ENCODE measurements at regions of chr11 and their contacts with region 1.

Region 1: GRCh38 chr11:87290304-87290922 is 252.7 kb downstream of the TMEM135 start:
- DNase-seq: peak in 1 of 2 experiments; percentile 63
- H3K4me3 ChIP-seq: no peak overlapping the region
- H3K27ac ChIP-seq: no peak overlapping the region
- H3K4me1 ChIP-seq: no peaks in the 10 kb centered on the region
- H3K27me3 ChIP-seq: no peaks in the 10 kb centered on the region
- CTCF ChIP-seq: peak; percentile 90

Region 2: GRCh38 chr11:86360775-86361395 is 929.5 kb before region 1 on chr11:
- CTCF ChIA-PET with region 1: no interaction called
- POLR2A ChIA-PET with region 1: no interaction called
- intact Hi-C with region 1: loop called (anchors 10 kb)
- DNase-seq: peak in 1 of 2 experiments; percentile 65
- H3K4me3 ChIP-seq: no peak overlapping the region
- H3K27ac ChIP-seq: no peak overlapping the region
- H3K4me1 ChIP-seq: no peaks in the 10 kb centered on the region
- H3K27me3 ChIP-seq: no peaks in the 10 kb centered on the region
- CTCF ChIP-seq: peak; percentile 77

Region 3: DNA sequence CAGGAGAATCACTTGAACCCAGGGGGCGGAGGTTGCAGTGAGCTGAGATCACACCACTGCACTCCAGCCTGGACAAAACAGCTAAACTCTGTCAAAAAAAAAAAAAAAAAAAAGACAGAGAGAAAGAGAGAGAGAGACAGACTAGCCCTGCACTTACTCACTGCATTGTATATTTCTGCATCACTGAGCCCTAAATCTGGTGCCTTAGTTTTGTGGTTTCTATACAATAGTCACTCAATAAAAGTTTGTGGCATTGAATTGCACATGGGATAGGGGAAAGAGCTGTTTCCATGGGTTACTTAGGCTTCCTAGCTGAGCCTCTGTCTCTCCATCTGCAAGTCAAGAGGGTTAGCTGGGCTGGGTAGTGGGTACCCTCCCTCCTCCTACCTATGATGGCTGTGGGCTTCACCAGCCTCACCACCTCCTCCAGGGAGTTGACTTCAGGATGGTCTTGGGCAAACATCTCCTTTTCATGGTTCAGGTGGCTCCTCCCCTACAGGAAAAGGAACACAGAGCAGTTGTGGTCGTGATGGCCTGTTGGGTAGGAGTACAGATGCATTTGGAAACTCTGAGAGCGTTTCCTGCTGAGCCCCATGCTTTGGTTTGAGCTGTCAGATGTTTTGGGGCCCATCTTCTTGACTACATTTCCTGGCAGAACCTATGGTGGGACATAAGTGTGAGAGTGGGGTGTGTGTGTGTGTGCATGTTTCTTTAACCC is 842.5 kb before region 1 on chr11:
- CTCF ChIA-PET with region 1: no interaction called
- POLR2A ChIA-PET with region 1: no interaction called
- intact Hi-C with region 1: no loop called
- DNase-seq: no peak
- H3K4me3 ChIP-seq: no peak overlapping the region
- H3K27ac ChIP-seq: no peak overlapping the region
- H3K4me1 ChIP-seq: peaks cover 3% of the 10 kb centered on the region
- H3K27me3 ChIP-seq: no peaks in the 10 kb centered on the region
- CTCF ChIP-seq: no peak

Region 4: GRCh38 chr11:86869966-86870570 is 420.3 kb before region 1 on chr11:
- CTCF ChIA-PET with region 1: no interaction called
- POLR2A ChIA-PET with region 1: no interaction called
- intact Hi-C with region 1: loop called (anchors 1 kb)
- DNase-seq: peak in 1 of 2 experiments; percentile 25
- H3K4me3 ChIP-seq: no peak overlapping the region
- H3K27ac ChIP-seq: no peak overlapping the region
- H3K4me1 ChIP-seq: no peaks in the 10 kb centered on the region
- H3K27me3 ChIP-seq: no peaks in the 10 kb centered on the region
- CTCF ChIP-seq: peak; percentile 95

Region 5: GRCh38 chr11:86938900-86939880 is 351.2 kb before region 1 on chr11:
- CTCF ChIA-PET with region 1: no interaction called
- POLR2A ChIA-PET with region 1: no interaction called
- intact Hi-C with region 1: loop called (anchors 1 kb)
- DNase-seq: peak in 1 of 2 experiments; percentile 58
- H3K4me3 ChIP-seq: no peak overlapping the region
- H3K27ac ChIP-seq: no peak overlapping the region
- H3K4me1 ChIP-seq: peaks cover 26% of the 10 kb centered on the region
- H3K27me3 ChIP-seq: no peaks in the 10 kb centered on the region
- CTCF ChIP-seq: peak; percentile 83

Region 6: GRCh38 chr11:86955361-86956120 is 334.9 kb before region 1 on chr11 and contains the start of gene FZD4:
- CTCF ChIA-PET with region 1: no interaction called
- POLR2A ChIA-PET with region 1: no interaction called
- intact Hi-C with region 1: loop called (anchors 5 kb)
- DNase-seq: peak; percentile 77 to 91
- H3K4me3 ChIP-seq: peak within 1 kb of the TSS; percentile 85
- H3K27ac ChIP-seq: peak within 1 kb of the TSS; percentile 56
- H3K4me1 ChIP-seq: peaks cover 16% of the 10 kb centered on the region
- H3K27me3 ChIP-seq: no peaks in the 10 kb centered on the region
- CTCF ChIP-seq: peak; percentile 54; the same call in 1 of the 2 replicates
- total RNA-seq, gene FZD4: 2.6 TPM in 2 replicates

Region 7: DNA sequence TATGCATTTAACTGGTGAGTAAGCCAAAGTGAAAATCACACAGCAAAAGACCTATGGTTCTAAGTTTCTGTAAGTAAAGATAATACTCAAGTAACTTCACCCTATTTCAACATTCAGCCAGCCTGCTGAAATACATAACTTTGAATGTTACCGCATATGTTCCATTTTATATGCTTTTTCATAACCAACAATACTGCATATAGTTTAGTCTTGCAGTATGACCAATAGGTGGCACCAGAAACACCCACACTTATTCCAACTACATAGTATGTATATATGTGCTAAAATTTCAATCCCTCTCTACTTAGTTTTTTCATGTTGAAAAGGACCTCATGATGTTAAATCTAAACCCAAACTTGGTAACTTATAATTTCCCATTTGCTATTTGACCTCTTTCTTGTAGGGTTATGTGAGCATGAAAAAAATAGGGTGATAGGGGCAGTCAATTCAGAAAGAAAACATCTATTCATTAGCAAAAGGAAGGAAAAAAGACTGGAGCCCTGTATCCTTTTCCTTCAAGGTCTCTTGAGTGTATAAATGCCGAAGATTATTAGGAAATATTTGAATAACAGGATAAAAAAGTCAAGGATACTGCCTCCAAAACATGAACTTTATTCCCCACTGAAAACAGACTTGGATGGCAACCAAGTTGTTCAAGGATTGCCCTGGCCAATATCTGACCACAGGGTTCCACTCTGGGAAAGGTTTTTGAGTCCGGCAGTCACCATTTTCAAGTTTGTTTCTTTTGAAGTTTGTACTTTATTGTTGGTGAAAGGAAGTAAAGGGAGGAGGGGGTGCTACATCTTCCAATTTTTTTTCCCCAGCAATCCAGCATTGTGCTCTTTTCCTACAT is 311.4 kb before region 1 on chr11:
- CTCF ChIA-PET with region 1: no interaction called
- POLR2A ChIA-PET with region 1: no interaction called
- intact Hi-C with region 1: loop called (anchors 1 kb)
- DNase-seq: no peak
- H3K4me3 ChIP-seq: no peak overlapping the region
- H3K27ac ChIP-seq: no peak overlapping the region
- H3K4me1 ChIP-seq: peaks cover 19% of the 10 kb centered on the region
- H3K27me3 ChIP-seq: no peaks in the 10 kb centered on the region
- CTCF ChIP-seq: peak; percentile 83

Region 8: GRCh38 chr11:87173185-87174039 is 117.0 kb before region 1 on chr11:
- CTCF ChIA-PET with region 1: no interaction called
- POLR2A ChIA-PET with region 1: no interaction called
- intact Hi-C with region 1: no loop called
- DNase-seq: peak in 1 of 2 experiments; percentile 83
- H3K4me3 ChIP-seq: 0 out of 2 replicates have a peak overlapping the region, but pooled peaks have one; percentile 19
- H3K27ac ChIP-seq: peak overlapping the region; percentile 74
- H3K4me1 ChIP-seq: peaks cover 40% of the 10 kb centered on the region
- H3K27me3 ChIP-seq: no peaks in the 10 kb centered on the region
- CTCF ChIP-seq: no peak

Region 9: DNA sequence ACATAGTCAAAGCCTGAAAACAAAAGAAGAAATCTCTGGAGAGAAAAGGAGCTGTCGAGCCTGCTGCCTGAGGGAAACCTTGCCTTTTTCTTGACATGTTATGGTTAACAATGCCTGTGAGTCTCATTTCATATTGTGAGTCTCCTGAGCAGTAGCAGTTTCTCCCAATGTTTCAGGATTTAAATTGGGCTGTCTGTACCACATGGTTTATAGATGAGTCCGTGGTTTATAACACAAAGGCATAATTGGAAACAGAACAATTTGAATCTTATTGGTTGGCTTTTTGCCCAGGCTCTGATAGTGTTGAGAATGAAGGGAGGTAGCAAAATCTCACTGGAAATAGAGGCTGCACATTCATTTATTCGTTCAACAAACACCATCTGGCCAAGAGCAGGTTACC is 343.9 kb after region 1 on chr11:
- CTCF ChIA-PET with region 1: no interaction called
- POLR2A ChIA-PET with region 1: no interaction called
- intact Hi-C with region 1: no loop called
- DNase-seq: no peak
- H3K4me3 ChIP-seq: no peak overlapping the region
- H3K27ac ChIP-seq: no peak overlapping the region
- H3K4me1 ChIP-seq: no peaks in the 10 kb centered on the region
- H3K27me3 ChIP-seq: no peaks in the 10 kb centered on the region
- CTCF ChIP-seq: no peak

Measured in PC-9 (cell line).